Activated CD8-positive, alpha-beta T cell treated with anti-CD3 and anti-CD28 coated beads for 36 hours (primary cell): ENCODE measurements at regions of chr5 and their contacts with region 1.

Region 1: DNA sequence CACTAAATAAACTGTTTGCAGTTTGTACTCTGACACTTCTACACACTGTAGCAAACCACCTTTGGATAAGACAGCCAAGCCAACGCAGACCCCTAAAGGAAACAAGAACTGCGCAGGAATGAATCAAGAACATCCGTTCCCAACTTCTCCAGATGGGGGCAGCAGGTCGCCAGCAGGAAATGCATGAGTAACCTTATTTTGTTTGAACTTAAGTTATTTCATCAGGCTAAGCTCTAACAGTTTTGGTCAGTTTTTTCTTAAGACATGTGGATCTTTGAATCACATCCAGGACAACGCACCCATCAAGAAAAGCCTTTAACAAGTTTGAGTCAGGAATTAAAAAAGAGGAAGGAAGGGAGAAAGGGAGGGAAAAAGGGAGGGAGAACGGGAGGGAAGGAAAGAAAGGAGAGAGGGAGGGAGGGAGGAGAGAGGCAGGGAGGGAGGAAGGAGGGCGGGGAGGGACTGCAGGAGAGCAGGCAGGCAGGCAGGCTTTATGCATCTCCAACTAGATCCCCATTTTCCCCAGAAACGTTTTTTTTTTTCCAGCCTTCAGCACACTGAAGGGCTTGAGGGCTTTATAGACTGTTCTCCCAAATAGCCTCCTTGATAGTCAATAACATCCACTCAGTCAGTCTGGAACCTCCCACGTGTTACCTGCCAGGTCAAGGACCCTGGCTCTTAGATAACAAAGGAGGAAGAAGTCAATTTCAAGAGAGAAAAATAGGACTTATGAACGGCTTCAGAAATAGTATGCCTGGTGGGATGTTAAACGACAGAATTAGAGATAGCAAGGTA is 22.2 kb downstream of the BHMT start:
- DNase-seq: peak; percentile 90
- ATAC-seq: peak; percentile 93
- H3K4me3 Mint-ChIP-seq: peak overlapping the region; percentile 61
- H3K27ac Mint-ChIP-seq: peak overlapping the region; percentile 88
- H3K4me1 Mint-ChIP-seq: peaks cover 22% of the 10 kb centered on the region
- H3K27me3 Mint-ChIP-seq: peaks cover 3% of the 10 kb centered on the region
- CTCF ChIP-seq: no peak

Region 2: DNA sequence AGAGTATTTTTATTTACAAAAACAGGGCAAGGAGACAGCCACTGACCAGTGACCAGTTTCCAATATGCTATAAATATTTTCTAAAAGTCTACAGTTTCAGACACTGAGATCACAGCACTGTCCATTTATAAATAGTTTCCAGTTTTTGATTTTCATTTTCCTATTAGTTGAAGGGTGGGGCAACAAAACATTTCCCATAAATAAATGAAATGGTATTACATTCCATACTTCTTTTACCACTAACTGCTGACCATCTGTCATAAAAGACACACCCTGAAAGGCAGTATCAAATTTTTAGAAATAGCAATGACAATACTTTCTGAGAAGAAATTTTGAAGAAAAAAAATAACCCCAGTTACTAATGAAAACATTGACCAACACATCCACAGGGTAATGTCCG is 275.5 kb before region 1 on chr5:
- CTCF ChIA-PET with region 1: no interaction called
- POLR2A ChIA-PET with region 1: no interaction called
- intact Hi-C with region 1: no loop called
- DNase-seq: no peak
- ATAC-seq: no peak
- H3K4me3 Mint-ChIP-seq: no peak overlapping the region
- H3K27ac Mint-ChIP-seq: no peak overlapping the region
- H3K4me1 Mint-ChIP-seq: no peaks in the 10 kb centered on the region
- H3K27me3 Mint-ChIP-seq: no peaks in the 10 kb centered on the region
- CTCF ChIP-seq: no peak

Region 3: GRCh38 chr5:78886341-78887230 is 247.3 kb before region 1 on chr5:
- CTCF ChIA-PET with region 1: interaction called, 14 read pairs
- POLR2A ChIA-PET with region 1: no interaction called
- intact Hi-C with region 1: no loop called
- DNase-seq: no peak
- ATAC-seq: no peak
- H3K4me3 Mint-ChIP-seq: no peak overlapping the region
- H3K27ac Mint-ChIP-seq: no peak overlapping the region
- H3K4me1 Mint-ChIP-seq: peaks cover 20% of the 10 kb centered on the region
- H3K27me3 Mint-ChIP-seq: no peaks in the 10 kb centered on the region
- CTCF ChIP-seq: peak; percentile 78

Region 4: GRCh38 chr5:79011219-79011836 is 122.5 kb before region 1 on chr5:
- CTCF ChIA-PET with region 1: interaction called, 12 read pairs
- POLR2A ChIA-PET with region 1: no interaction called
- intact Hi-C with region 1: no loop called
- DNase-seq: no peak
- ATAC-seq: no peak
- H3K4me3 Mint-ChIP-seq: no peak overlapping the region
- H3K27ac Mint-ChIP-seq: no peak overlapping the region
- H3K4me1 Mint-ChIP-seq: no peaks in the 10 kb centered on the region
- H3K27me3 Mint-ChIP-seq: peaks cover 17% of the 10 kb centered on the region
- CTCF ChIP-seq: no peak

Region 5: GRCh38 chr5:79042188-79042587 is 91.7 kb before region 1 on chr5:
- CTCF ChIA-PET with region 1: interaction called, 16 read pairs
- POLR2A ChIA-PET with region 1: no interaction called
- intact Hi-C with region 1: no loop called
- DNase-seq: no peak
- ATAC-seq: no peak
- H3K4me3 Mint-ChIP-seq: no peak overlapping the region
- H3K27ac Mint-ChIP-seq: no peak overlapping the region
- H3K4me1 Mint-ChIP-seq: no peaks in the 10 kb centered on the region
- H3K27me3 Mint-ChIP-seq: no peaks in the 10 kb centered on the region
- CTCF ChIP-seq: no peak

Region 6: DNA sequence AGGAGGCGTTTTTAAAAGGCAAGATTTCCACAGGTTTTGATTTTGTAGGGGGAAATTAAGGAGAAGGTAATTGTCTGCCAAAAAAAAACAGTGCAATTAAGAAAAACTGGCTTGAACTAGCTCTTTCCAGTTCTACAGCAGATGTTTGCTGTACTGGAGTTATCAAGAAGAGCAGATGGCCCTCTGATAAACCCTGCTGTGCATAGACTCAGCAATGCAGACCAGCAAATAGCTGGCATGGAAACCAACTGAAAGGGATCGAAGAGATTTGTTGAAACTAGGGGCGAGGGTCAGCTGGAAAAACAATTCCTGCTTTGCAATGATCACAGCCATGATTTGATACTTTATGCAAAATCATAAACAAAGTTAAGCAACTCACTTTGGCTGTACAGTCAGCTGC is 40.1 kb before region 1 on chr5:
- CTCF ChIA-PET with region 1: no interaction called
- POLR2A ChIA-PET with region 1: no interaction called
- intact Hi-C with region 1: no loop called
- DNase-seq: no peak
- ATAC-seq: no peak
- H3K4me3 Mint-ChIP-seq: no peak overlapping the region
- H3K27ac Mint-ChIP-seq: no peak overlapping the region
- H3K4me1 Mint-ChIP-seq: no peaks in the 10 kb centered on the region
- H3K27me3 Mint-ChIP-seq: peaks cover 5% of the 10 kb centered on the region
- CTCF ChIP-seq: no peak

Region 7: DNA sequence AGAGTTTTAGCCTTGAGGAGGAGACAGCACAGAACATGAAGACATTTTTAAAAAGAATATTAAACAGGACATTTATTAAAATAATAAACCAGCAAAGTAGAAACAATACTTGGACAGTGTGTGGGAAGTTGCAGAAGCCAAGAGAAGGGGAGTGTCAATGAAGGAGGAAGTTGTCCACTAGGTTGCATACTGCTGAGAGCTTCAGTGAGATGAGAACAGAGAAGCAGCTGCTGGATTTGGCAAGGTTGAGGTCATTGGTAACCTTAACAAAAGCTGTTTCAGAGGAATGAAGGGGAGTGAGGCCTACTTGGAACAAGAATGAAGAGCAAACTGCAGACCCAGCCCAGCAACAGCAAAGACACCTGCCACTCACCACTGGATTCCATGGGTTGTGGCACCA is 10.9 kb before region 1 on chr5:
- CTCF ChIA-PET with region 1: interaction called, 23 read pairs
- POLR2A ChIA-PET with region 1: no interaction called
- intact Hi-C with region 1: no loop called
- DNase-seq: no peak
- ATAC-seq: no peak
- H3K4me3 Mint-ChIP-seq: no peak overlapping the region
- H3K27ac Mint-ChIP-seq: no peak overlapping the region
- H3K4me1 Mint-ChIP-seq: no peaks in the 10 kb centered on the region
- H3K27me3 Mint-ChIP-seq: no peaks in the 10 kb centered on the region
- CTCF ChIP-seq: no peak

Region 8: DNA sequence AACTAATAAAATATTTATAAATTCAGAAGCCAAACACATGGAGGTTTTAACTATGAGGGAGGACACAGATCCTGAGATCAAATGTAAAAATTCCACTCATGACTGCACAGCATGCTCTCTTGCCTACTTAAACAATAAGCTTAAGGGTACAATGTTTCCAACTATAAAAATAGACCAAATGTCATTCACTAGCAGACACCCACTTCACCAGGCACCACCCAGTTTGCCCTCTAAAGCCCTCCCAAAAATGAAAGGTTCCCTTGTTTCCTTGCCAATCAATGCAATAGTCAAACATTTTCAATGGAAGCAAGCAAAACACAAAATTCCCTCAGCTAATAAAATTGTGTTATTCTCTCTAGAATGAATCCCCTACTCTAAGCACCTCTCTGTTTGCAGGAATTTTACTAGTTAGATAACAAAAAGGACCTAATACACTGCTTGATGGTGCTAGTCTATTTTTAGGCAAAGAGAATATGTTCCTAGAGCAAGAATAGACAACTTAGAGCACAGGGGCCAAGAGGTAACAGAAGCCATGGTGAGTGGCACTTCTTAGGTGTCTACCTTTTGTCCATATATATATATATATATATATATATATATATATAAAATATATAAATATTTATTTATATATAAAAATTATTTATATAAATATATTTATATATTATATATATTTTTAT is 244.8 kb after region 1 on chr5:
- CTCF ChIA-PET with region 1: no interaction called
- POLR2A ChIA-PET with region 1: no interaction called
- intact Hi-C with region 1: no loop called
- DNase-seq: no peak
- ATAC-seq: no peak
- H3K4me3 Mint-ChIP-seq: no peak overlapping the region
- H3K27ac Mint-ChIP-seq: no peak overlapping the region
- H3K4me1 Mint-ChIP-seq: no peaks in the 10 kb centered on the region
- H3K27me3 Mint-ChIP-seq: no peaks in the 10 kb centered on the region
- CTCF ChIP-seq: no peak

Region 9: GRCh38 chr5:79464695-79465332 is 331.0 kb after region 1 on chr5:
- CTCF ChIA-PET with region 1: interaction called, 69 read pairs
- POLR2A ChIA-PET with region 1: no interaction called
- intact Hi-C with region 1: loop called (anchors 1 kb)
- DNase-seq: no peak
- ATAC-seq: no peak
- H3K4me3 Mint-ChIP-seq: no peak overlapping the region
- H3K27ac Mint-ChIP-seq: no peak overlapping the region
- H3K4me1 Mint-ChIP-seq: no peaks in the 10 kb centered on the region
- H3K27me3 Mint-ChIP-seq: peaks cover 1% of the 10 kb centered on the region
- CTCF ChIP-seq: peak; percentile 66